Panc1 (cell line): ENCODE measurements at regions of chr3 and their contacts with region 1.

Region 1: GRCh38 chr3:120713262-120713661 is 29.1 kb downstream of the RABL3 start:
- DNase-seq: no peak
- ATAC-seq: no peak
- H3K4me3 ChIP-seq: no peak overlapping the region
- H3K27ac ChIP-seq: no peak overlapping the region
- H3K4me1 ChIP-seq: no peaks in the 10 kb centered on the region
- H3K27me3 ChIP-seq: no peaks in the 10 kb centered on the region
- CTCF ChIP-seq: no peak

Region 2: GRCh38 chr3:119731560-119732343 is 981.5 kb before region 1 on chr3:
- CTCF ChIA-PET with region 1: no interaction called
- POLR2A ChIA-PET with region 1: interaction called, 11 read pairs
- in situ Hi-C with region 1: no loop called
- intact Hi-C with region 1: no loop called
- DNase-seq: no peak
- ATAC-seq: no peak
- H3K4me3 ChIP-seq: no peak overlapping the region
- H3K27ac ChIP-seq: no peak overlapping the region
- H3K4me1 ChIP-seq: no peaks in the 10 kb centered on the region
- H3K27me3 ChIP-seq: no peaks in the 10 kb centered on the region; the same call in 1 of the 2 replicates
- CTCF ChIP-seq: no peak

Region 3: DNA sequence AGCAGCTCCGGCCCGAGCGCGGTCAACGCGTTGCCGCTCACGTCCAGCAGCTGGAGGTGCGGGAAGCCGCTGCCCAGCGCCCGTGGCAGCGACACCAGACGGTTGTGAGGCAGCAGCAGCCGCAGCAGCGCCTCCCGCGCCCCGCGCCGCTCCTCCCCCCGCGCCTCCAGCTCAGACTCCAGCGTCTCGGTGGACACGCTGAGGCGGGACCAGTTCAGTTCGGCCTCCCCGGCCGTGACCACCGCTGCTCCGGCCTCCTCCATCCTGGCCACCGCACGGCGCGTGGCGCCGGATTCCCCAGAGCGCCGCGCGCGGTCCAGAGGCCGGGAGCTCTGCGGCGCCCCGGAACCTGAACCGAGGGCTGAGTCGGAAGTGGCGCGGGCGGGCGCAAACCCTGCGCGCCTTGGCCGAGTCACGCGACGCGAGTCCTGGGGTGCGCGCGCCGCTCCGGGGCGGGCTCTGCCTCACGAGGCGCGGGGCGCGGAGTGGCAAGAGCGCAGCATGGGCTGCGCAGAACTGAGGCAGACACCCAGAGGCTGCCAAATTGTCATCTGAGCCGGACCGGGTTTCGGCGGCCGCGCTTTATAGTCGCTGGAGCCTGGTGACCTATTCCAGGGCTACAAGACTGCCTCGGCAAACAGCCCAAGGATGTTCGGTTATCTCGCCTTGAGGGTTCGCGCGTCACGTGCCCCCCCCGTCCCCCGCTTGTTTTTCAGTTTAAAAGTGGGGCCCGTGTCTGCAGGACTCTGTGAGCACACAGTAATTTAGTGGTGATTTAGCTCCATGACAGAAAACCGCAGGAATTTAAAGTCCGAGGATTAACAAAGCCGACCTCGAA is 364.1 kb before region 1 on chr3 and contains the start of gene LRRC58:
- CTCF ChIA-PET with region 1: no interaction called
- POLR2A ChIA-PET with region 1: no interaction called
- in situ Hi-C with region 1: no loop called
- intact Hi-C with region 1: no loop called
- DNase-seq: peak; percentile 58
- ATAC-seq: peak; percentile 97
- H3K4me3 ChIP-seq: peak within 1 kb of the TSS; percentile 82 to 95
- H3K27ac ChIP-seq: peak within 1 kb of the TSS; percentile 94
- H3K4me1 ChIP-seq: peaks cover 30% of the 10 kb centered on the region
- H3K27me3 ChIP-seq: no peaks in the 10 kb centered on the region; the same call in 1 of the 2 replicates
- CTCF ChIP-seq: peak; percentile 68
- total RNA-seq, gene LRRC58: 29.5 TPM

Region 4: GRCh38 chr3:120661118-120661935 is 51.9 kb before region 1 on chr3:
- CTCF ChIA-PET with region 1: no interaction called
- POLR2A ChIA-PET with region 1: no interaction called
- in situ Hi-C with region 1: no loop called
- intact Hi-C with region 1: no loop called
- DNase-seq: no peak
- ATAC-seq: no peak
- H3K4me3 ChIP-seq: no peak overlapping the region
- H3K27ac ChIP-seq: no peak overlapping the region
- H3K4me1 ChIP-seq: no peaks in the 10 kb centered on the region
- H3K27me3 ChIP-seq: peaks cover 2% of the 10 kb centered on the region; the same call in 1 of the 2 replicates
- CTCF ChIP-seq: no peak